ENCODE measurements at regions of chr10 and their contacts with region 1.

Region 1: DNA sequence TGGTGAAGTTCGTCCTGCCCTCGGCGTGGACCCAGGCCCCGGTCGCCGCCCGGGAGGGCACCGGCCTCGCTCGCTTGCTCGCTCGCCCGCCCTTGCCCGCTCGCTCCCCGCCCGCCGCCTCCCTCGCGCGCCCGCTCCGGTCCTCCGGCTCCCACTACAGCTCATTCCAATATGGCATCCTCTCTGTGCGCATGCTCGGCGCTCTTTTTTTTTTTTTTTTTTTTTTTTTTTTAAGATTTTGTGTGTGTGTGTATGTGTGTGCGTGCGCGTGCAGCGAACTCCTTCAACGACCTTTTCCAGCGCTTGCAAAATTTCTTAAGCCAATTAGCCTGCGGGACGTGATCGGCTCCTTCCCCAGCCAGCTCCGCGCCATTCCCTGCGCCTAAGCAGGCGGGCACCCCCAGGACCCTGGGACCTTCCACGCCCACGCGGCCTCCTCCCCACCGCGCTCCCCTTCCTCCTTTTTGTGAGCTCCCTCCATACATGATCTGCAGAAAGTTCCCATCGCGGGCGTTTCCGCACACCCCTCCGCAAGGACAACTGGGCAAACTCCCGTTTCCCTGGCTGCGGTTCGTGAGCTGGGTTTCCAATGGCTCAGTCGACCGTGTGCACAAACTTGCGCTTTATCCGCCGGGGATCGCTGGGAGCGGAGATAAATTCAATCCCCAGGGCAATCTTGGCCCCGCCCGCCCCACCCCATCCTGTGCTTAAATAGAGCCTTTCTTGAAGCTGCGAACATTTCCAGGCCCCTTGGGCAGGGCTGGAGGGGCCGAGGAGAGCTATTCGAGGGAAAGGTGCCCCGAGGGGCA is at the start of gene SFMBT2:
- DNase-seq: peak; percentile 52
- ATAC-seq: peak; percentile 59
- H3K4me3 Mint-ChIP-seq: peak within 1 kb of the TSS; percentile 95
- H3K27ac Mint-ChIP-seq: peak within 1 kb of the TSS; percentile 71
- H3K4me1 Mint-ChIP-seq: peaks cover 36% of the 10 kb centered on the region
- H3K27me3 Mint-ChIP-seq: peaks cover 5% of the 10 kb centered on the region
- CTCF ChIP-seq: no peak
- total RNA-seq, gene SFMBT2: 18.7 and 19.2 TPM in 2 replicates

Region 2: GRCh38 chr10:6144406-6145165 is 1266.5 kb before region 1 on chr10:
- CTCF ChIA-PET with region 1: no interaction called
- POLR2A ChIA-PET with region 1: no interaction called
- intact Hi-C with region 1: loop called (anchors 10 kb)
- DNase-seq: peak; percentile 85
- ATAC-seq: peak; percentile 86
- H3K4me3 Mint-ChIP-seq: peak overlapping the region; percentile 88
- H3K27ac Mint-ChIP-seq: peak overlapping the region; percentile 77
- H3K4me1 Mint-ChIP-seq: peaks cover 66% of the 10 kb centered on the region
- H3K27me3 Mint-ChIP-seq: no peaks in the 10 kb centered on the region
- CTCF ChIP-seq: no peak

Region 3: GRCh38 chr10:6667679-6668270 is 743.3 kb before region 1 on chr10:
- CTCF ChIA-PET with region 1: no interaction called
- POLR2A ChIA-PET with region 1: no interaction called
- intact Hi-C with region 1: loop called (anchors 2 kb)
- DNase-seq: no peak
- ATAC-seq: no peak
- H3K4me3 Mint-ChIP-seq: no peak overlapping the region
- H3K27ac Mint-ChIP-seq: no peak overlapping the region
- H3K4me1 Mint-ChIP-seq: no peaks in the 10 kb centered on the region
- H3K27me3 Mint-ChIP-seq: peaks cover 8% of the 10 kb centered on the region
- CTCF ChIP-seq: no peak

Region 4: DNA sequence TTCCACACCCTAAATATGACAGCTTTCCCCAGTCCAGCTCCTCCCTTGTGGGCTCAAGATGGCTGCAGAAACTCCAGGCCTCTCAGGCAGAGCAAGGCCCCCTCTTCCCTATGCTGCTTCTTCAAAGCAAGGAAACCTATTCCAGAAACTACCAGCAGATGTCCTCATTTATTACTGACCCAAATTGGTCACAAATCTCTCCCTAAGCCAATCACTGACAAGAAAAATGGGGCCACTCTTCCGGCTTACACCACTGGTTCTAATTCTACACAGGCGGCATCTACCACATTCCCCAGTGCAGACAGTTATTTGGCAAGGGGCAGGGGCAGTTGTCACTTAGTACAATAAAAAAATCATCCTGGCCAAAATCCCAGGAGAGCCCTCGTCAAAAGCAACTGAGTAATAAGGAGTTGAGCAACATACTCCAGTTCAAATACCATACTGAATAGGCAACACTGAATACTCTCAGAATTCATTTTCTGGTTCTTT is 150.6 kb before region 1 on chr10:
- CTCF ChIA-PET with region 1: interaction called, 10 read pairs
- POLR2A ChIA-PET with region 1: interaction called, 5 read pairs
- intact Hi-C with region 1: loop called (anchors 1 kb)
- DNase-seq: no peak
- ATAC-seq: peak; percentile 81
- H3K4me3 Mint-ChIP-seq: no peak overlapping the region
- H3K27ac Mint-ChIP-seq: no peak overlapping the region
- H3K4me1 Mint-ChIP-seq: peaks cover 29% of the 10 kb centered on the region
- H3K27me3 Mint-ChIP-seq: no peaks in the 10 kb centered on the region
- CTCF ChIP-seq: peak; percentile 53

Region 5: GRCh38 chr10:7525314-7526016 is 114.4 kb after region 1 on chr10:
- CTCF ChIA-PET with region 1: interaction called, 8 read pairs
- POLR2A ChIA-PET with region 1: interaction called, 3 read pairs
- intact Hi-C with region 1: loop called (anchors 1 kb)
- DNase-seq: no peak
- ATAC-seq: peak; percentile 82
- H3K4me3 Mint-ChIP-seq: no peak overlapping the region
- H3K27ac Mint-ChIP-seq: no peak overlapping the region
- H3K4me1 Mint-ChIP-seq: peaks cover 14% of the 10 kb centered on the region
- H3K27me3 Mint-ChIP-seq: peaks cover 4% of the 10 kb centered on the region
- CTCF ChIP-seq: no peak

Region 6: GRCh38 chr10:7787857-7788638 is 377.0 kb after region 1 on chr10 and contains the starts of genes ATP5F1C and KIN:
- CTCF ChIA-PET with region 1: no interaction called
- POLR2A ChIA-PET with region 1: no interaction called
- intact Hi-C with region 1: loop called (anchors 10 kb)
- DNase-seq: peak; percentile 93
- ATAC-seq: peak; percentile 97
- H3K4me3 Mint-ChIP-seq: no peak within 1 kb of the TSS
- H3K27ac Mint-ChIP-seq: no peak within 1 kb of the TSS
- H3K4me1 Mint-ChIP-seq: peaks cover 51% of the 10 kb centered on the region
- H3K27me3 Mint-ChIP-seq: no peaks in the 10 kb centered on the region
- CTCF ChIP-seq: no peak
- total RNA-seq, gene ATP5F1C: 177 and 182 TPM in 2 replicates
- total RNA-seq, gene KIN: 12.6 and 13.1 TPM in 2 replicates

Region 7: DNA sequence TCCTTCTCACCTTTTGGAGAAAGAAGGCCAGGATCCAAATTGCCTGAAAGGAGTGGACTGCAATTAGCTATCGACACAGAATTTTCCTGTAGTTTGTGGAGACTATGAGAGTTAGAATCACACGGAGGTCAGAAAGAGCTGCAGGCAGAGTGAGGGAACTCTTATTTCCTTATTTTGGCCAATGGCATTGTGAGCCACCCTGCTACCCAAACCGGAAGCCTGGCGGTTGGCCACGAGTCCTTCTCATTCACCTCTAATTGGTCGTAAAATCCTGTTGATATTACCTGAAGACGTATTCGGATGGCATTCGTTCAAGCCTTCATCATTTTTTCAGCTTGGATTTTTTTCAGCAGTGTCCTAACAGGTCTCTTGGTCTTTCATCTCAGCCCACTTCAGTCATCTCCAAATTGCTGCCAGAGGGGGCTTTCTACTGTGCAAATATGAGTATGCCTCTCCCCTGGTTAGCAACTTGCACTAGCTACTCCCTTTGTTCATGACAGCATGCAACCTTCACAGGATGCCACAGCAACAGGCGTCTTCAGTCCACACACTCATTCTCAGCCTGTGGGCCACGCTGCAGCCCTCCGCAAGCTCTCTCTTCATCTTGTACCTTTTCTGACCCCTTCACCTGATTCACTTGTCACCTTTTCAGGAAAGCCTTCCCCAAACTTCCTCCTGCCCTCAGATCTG is 710.3 kb after region 1 on chr10:
- CTCF ChIA-PET with region 1: no interaction called
- POLR2A ChIA-PET with region 1: no interaction called
- intact Hi-C with region 1: no loop called
- DNase-seq: no peak
- ATAC-seq: no peak
- H3K4me3 Mint-ChIP-seq: no peak overlapping the region
- H3K27ac Mint-ChIP-seq: no peak overlapping the region
- H3K4me1 Mint-ChIP-seq: no peaks in the 10 kb centered on the region
- H3K27me3 Mint-ChIP-seq: no peaks in the 10 kb centered on the region
- CTCF ChIP-seq: no peak